ENCODE measurements at regions of chr11 and their contacts with region 1.

Region 1: DNA sequence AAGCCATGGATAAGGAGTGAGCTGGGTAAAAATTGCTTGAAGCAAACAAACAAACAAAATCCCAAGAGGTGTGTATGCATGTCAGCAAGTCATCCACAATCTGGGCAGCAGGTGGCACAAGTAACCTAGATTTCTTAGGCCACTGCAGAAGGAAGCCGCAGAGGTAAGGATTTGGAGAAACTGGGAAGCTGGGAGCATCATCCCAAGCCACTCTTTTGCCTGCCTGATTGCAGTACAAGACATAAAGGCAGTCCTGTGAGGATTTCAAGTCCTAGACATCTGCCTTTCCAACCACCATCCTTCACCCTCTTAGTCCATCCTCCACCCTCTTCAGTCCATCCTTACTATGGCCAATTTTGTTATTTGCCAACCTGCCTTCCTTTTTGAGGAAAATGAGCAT is 67.2 kb upstream of the BMAL1 start:
- DNase-seq: peak; percentile 64
- H3K4me3 ChIP-seq: no peak overlapping the region
- H3K27ac ChIP-seq: no peak overlapping the region
- H3K4me1 ChIP-seq: no peaks in the 10 kb centered on the region
- H3K27me3 ChIP-seq: no peaks in the 10 kb centered on the region
- CTCF ChIP-seq: peak; percentile 47

Region 2: DNA sequence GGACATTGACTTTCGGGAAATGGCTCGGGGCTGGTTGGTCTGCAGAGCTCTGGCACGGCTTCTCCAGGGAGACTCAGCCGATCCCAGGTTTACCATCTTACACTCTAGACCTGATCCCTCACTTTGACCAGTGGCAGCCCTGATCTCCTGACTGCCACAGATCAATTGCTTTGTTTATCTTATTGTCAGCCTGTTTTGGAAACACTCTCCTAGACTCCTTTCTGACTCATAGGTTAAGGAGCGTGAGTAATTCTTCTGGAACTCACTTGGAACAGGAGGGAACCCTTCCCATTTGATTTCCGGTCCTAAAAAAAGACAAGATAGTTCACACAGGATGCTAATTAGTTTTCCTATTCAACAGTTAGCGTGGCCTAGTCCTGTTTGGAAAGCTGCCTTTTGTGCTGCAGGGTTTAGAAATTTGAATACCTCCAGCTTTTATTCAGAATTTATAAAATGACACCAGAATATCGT is 51.2 kb after region 1 on chr11:
- intact Hi-C with region 1: no loop called
- DNase-seq: no peak
- H3K4me3 ChIP-seq: no peak overlapping the region
- H3K27ac ChIP-seq: no peak overlapping the region
- H3K4me1 ChIP-seq: no peaks in the 10 kb centered on the region
- H3K27me3 ChIP-seq: no peaks in the 10 kb centered on the region
- CTCF ChIP-seq: no peak

Region 3: GRCh38 chr11:13335319-13335718 is 124.9 kb after region 1 on chr11:
- intact Hi-C with region 1: loop called (anchors 2 kb)
- DNase-seq: peak; percentile 76
- H3K4me3 ChIP-seq: no peak overlapping the region
- H3K27ac ChIP-seq: no peak overlapping the region
- H3K4me1 ChIP-seq: peaks cover 7% of the 10 kb centered on the region
- H3K27me3 ChIP-seq: no peaks in the 10 kb centered on the region
- CTCF ChIP-seq: peak; percentile 75

Region 4: GRCh38 chr11:13343931-13344717 is 133.7 kb after region 1 on chr11:
- intact Hi-C with region 1: loop called (anchors 2 kb)
- DNase-seq: peak; percentile 75
- H3K4me3 ChIP-seq: no peak overlapping the region
- H3K27ac ChIP-seq: no peak overlapping the region
- H3K4me1 ChIP-seq: no peaks in the 10 kb centered on the region
- H3K27me3 ChIP-seq: no peaks in the 10 kb centered on the region
- CTCF ChIP-seq: peak; percentile 59